ENCODE measurements at regions of chr16 and their contacts with region 1.

Region 1: GRCh38 chr16:46853713-46854443 is 22.9 kb upstream of the C16orf87 start:
- DNase-seq: peak; percentile 83
- H3K4me3 ChIP-seq: no peak overlapping the region; a peak in 1 of 4 replicates
- H3K27ac ChIP-seq: no peak overlapping the region
- H3K4me1 ChIP-seq: peaks cover 0 to 2% of the 10 kb centered on the region in 2 experiments; a peak in 1 of 4 replicates
- H3K27me3 ChIP-seq: no peaks in the 10 kb centered on the region
- CTCF ChIP-seq: peak; percentile 86
- EP300 ChIP-seq: no peak
- RAD21 ChIP-seq: peak; percentile 99

Region 2: DNA sequence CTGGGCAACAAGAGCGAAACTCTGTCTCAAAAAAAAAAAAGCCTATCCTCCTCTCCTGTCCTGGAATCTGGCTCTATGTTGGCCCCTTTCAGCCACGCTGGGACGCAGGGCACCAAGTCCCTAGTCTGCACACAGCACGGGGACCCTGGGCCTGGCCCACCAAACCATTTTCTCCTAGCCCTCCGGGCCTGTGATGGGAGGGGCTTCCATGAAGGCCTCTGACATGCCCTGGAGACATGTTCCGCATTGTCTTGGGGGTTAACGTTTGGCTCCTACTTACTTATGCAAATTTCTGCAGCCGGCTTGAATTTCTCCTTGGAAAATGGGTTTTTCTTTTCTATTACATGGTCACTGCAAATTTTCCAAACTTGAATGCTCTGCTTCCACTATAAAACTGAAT is 17.7 kb after region 1 on chr16:
- CTCF ChIA-PET with region 1: interaction called, 36 read pairs
- POLR2A ChIA-PET with region 1: no interaction called
- DNase-seq: no peak
- H3K4me3 ChIP-seq: no peak overlapping the region
- H3K27ac ChIP-seq: no peak overlapping the region
- H3K4me1 ChIP-seq: peaks cover 0 to 4% of the 10 kb centered on the region in 2 experiments; a peak in 1 of 4 replicates
- H3K27me3 ChIP-seq: no peaks in the 10 kb centered on the region
- CTCF ChIP-seq: no peak
- EP300 ChIP-seq: no peak
- RAD21 ChIP-seq: no peak

Region 3: DNA sequence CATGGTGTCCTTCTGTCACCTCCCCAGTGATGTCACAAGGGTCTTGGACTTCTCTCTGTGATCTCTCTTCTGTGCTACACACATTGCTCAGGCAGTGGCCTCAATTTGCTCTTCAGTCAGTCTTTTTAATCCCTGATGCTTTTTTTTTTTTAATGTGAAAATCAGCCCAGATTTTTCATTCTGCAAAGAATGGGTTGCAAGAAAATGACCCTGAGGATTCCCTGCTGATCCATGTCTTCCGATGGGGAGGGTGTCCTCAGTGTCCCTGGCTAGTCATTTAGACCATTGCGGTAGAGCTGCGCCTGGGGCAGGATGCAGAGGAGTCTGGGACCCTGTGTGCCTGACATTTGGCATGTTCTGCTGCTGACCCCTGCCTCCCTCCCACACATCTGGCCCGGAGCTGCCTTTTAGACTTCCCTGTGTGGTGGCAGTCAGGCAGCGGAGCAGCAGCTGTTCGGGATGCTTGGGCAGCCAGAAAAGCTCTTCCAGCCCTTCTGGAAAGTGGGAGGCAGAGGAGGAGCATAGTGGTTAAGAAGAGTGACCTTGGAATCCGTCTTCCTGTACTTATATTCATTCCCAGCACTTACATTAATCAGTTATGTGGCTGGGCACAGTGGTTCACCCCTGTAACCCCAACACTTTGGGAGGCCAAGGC is 42.6 kb after region 1 on chr16:
- CTCF ChIA-PET with region 1: interaction called, 231 read pairs
- POLR2A ChIA-PET with region 1: no interaction called
- DNase-seq: peak; percentile 37
- H3K4me3 ChIP-seq: no peak overlapping the region
- H3K27ac ChIP-seq: no peak overlapping the region; a peak in 1 of 4 replicates
- H3K4me1 ChIP-seq: peaks cover 5 to 8% of the 10 kb centered on the region in 2 experiments; a peak in 2 of 4 replicates
- H3K27me3 ChIP-seq: no peaks in the 10 kb centered on the region
- CTCF ChIP-seq: no peak
- EP300 ChIP-seq: no peak
- RAD21 ChIP-seq: no peak

Region 4: GRCh38 chr16:46918861-46919792 is 65.2 kb after region 1 on chr16:
- CTCF ChIA-PET with region 1: interaction called, 231 read pairs
- POLR2A ChIA-PET with region 1: no interaction called
- DNase-seq: no peak
- H3K4me3 ChIP-seq: no peak overlapping the region
- H3K27ac ChIP-seq: no peak overlapping the region
- H3K4me1 ChIP-seq: no peaks in the 10 kb centered on the region; a peak in 1 of 4 replicates
- H3K27me3 ChIP-seq: no peaks in the 10 kb centered on the region
- CTCF ChIP-seq: no peak
- EP300 ChIP-seq: no peak
- RAD21 ChIP-seq: no peak

Region 5: DNA sequence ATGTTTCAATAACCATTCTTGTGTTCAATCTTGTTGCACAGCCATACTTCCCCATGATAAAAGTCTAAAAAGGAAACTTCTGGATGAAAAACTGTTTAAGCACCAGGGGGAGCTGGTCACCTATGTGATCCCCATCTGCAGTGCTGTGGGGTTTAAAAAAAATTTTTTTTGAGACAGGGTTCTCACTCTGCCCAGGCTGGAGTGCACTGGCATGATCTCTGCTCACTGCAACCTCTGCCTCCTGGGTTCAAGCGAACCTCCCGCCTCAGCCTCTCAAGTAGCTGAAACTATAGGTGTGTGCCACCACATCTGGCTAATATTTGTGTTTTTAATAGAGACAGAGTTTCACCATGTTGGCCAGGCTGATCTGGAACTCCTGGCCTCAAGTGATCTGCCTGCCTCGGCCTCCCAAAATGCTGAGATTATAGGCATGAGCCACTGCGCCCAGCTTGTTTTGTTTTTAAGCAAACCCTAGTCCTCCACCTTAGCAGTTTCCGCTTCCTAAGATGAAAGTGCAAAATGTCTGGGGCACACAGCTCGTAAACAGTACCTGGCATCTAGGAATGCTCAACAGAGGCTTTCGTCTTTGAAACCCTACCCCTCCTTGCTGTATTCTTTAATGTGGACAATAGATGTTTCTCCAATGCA is 94.1 kb after region 1 on chr16:
- CTCF ChIA-PET with region 1: interaction called, 18 read pairs
- POLR2A ChIA-PET with region 1: no interaction called
- DNase-seq: peak; percentile 65
- H3K4me3 ChIP-seq: no peak overlapping the region
- H3K27ac ChIP-seq: no peak overlapping the region
- H3K4me1 ChIP-seq: no peaks in the 10 kb centered on the region
- H3K27me3 ChIP-seq: no peaks in the 10 kb centered on the region
- CTCF ChIP-seq: peak; percentile 72
- EP300 ChIP-seq: no peak
- RAD21 ChIP-seq: peak; percentile 87

Region 6: DNA sequence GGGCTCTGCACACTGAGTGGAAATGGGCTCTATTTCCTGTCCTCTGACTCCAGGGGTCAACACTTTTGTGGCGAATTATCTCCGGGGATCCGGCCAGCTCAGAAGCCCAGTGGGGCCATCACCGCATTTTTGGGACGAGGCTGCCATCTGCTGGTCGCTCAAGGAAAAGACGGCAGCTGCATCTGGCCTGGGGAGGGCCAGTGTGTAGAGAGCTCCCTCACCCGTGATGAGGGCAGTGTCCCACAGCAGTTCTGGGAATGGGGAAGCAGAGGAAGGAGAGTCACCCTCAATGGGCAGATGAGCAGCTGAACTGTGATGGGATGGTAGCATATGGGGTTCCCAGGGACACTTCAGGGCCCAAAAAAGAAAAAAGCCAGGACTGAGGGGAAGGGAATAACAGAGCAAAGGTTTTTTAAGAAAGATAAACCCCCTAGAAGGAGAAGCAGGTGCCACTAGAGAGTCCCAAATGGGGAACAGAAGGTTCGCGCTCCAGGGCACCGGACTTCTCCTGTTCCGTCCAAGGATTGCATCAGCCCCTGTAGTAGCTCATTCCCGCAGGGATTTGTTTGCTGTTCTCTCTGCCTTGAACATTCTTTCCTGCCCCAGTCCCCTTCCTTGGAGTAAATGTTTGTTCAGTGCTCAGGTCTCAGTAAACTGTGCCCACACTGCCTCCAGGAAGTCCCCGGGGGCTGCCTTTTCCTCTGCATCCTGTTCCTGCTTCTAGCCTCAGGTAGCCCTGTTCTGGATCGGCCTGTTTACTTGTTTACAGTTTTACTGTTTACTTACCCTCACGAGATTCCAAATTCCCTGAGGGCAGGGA is 1311.2 kb after region 1 on chr16:
- CTCF ChIA-PET with region 1: interaction called, 11 read pairs
- POLR2A ChIA-PET with region 1: no interaction called
- DNase-seq: peak; percentile 88
- H3K4me3 ChIP-seq: peak overlapping the region in 1 of 2 experiments; percentile 12; a peak in 1 of 4 replicates
- H3K27ac ChIP-seq: no peak overlapping the region
- H3K4me1 ChIP-seq: peaks cover 0 to 4% of the 10 kb centered on the region in 2 experiments; a peak in 1 of 4 replicates
- H3K27me3 ChIP-seq: no peaks in the 10 kb centered on the region
- CTCF ChIP-seq: peak; percentile 88
- EP300 ChIP-seq: no peak
- RAD21 ChIP-seq: peak; percentile 93